Aorta (tissue), 5 donors: ENCODE measurements at regions of chr6 and their contacts with region 1.

Region 1: DNA sequence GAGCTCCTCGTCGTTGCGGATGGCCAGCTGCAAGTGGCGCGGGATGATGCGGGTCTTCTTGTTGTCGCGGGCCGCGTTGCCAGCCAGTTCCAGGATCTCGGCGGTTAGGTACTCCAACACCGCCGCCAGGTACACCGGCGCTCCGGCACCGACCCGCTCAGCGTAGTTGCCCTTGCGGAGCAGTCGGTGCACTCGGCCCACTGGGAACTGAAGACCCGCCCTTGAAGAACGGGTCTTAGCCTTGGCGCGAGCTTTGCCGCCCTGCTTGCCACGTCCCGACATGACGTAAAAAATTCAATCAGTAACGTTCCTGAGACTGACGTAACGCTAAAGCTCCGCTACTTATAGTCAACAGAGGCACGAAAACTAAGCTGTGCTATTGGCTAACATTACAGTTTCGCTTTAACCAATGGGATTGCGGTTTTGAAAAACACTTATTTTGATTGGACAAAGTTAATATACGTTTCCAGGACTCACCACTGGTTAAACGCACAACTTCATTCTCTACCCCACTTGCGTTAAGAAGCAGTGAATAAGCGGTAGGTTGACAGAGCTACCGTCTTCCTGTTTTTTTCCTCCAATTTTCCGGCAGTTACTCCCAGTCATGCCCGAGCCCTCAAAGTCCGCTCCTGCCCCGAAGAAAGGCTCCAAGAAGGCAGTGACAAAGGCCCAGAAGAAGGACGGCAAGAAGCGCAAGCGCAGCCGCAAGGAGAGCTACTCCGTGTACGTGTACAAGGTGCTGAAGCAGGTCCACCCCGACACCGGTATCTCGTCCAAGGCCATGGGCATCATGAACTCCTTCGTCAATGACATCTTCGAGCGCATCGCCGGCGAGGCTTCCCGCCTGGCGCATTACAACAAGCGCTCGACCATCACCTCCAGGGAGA is 73.9 kb downstream of the OR2B2 start:
- DNase-seq: peak; percentile 87 to 91
- ATAC-seq: peak; percentile 93
- H3K4me3 ChIP-seq: peak overlapping the region; percentile 67 to 79
- H3K27ac ChIP-seq: peak overlapping the region; percentile 91 to 97
- H3K4me1 ChIP-seq: no peaks in the 10 kb centered on the region
- H3K27me3 ChIP-seq: no peaks in the 10 kb centered on the region

Region 2: GRCh38 chr6:27864906-27865849 is 26.9 kb after region 1 on chr6:
- intact Hi-C with region 1: loop called in 1 of 2 experiments (anchors 2 kb)
- DNase-seq: peak; percentile 73 to 84
- ATAC-seq: peak; percentile 92
- H3K4me3 ChIP-seq: peak overlapping the region; percentile 55 to 94
- H3K27ac ChIP-seq: peak overlapping the region in 1 of 2 donors; percentile 39
- H3K4me1 ChIP-seq: no peaks in the 10 kb centered on the region
- H3K27me3 ChIP-seq: no peaks in the 10 kb centered on the region

Region 3: GRCh38 chr6:27888576-27888975 is 50.3 kb after region 1 on chr6:
- intact Hi-C with region 1: no loop called
- DNase-seq: no peak
- ATAC-seq: no peak
- H3K4me3 ChIP-seq: no peak overlapping the region
- H3K27ac ChIP-seq: no peak overlapping the region
- H3K4me1 ChIP-seq: no peaks in the 10 kb centered on the region
- H3K27me3 ChIP-seq: peaks cover 0 to 6% of the 10 kb centered on the region in 2 donors

Region 4: GRCh38 chr6:28171271-28171670 is 333.0 kb after region 1 on chr6:
- intact Hi-C with region 1: no loop called
- DNase-seq: no peak
- ATAC-seq: no peak
- H3K4me3 ChIP-seq: no peak overlapping the region
- H3K27ac ChIP-seq: no peak overlapping the region
- H3K4me1 ChIP-seq: no peaks in the 10 kb centered on the region
- H3K27me3 ChIP-seq: no peaks in the 10 kb centered on the region